CD4-positive, alpha-beta T cell (primary cell): ENCODE measurements at regions of chr2 and their contacts with region 1.

Region 1: GRCh38 chr2:62456721-62457539 is 49.1 kb downstream of the TMEM17 start:
- DNase-seq: peak; percentile 27 to 72 (median 54)
- ATAC-seq: peak; percentile 81
- H3K4me3 ChIP-seq: peak overlapping the region; percentile 47
- H3K4me3 Mint-ChIP-seq: peak overlapping the region; percentile 38
- H3K27ac ChIP-seq: no peak overlapping the region
- H3K27ac Mint-ChIP-seq: no peak overlapping the region
- H3K4me1 ChIP-seq: peaks cover 10% of the 10 kb centered on the region
- H3K4me1 Mint-ChIP-seq: no peaks in the 10 kb centered on the region
- H3K27me3 ChIP-seq: peaks cover 4 to 8% of the 10 kb centered on the region in 2 experiments
- H3K27me3 Mint-ChIP-seq: peaks cover 9% of the 10 kb centered on the region
- CTCF ChIP-seq: peak; percentile 87

Region 2: GRCh38 chr2:62774555-62775366 is 317.8 kb after region 1 on chr2:
- CTCF ChIA-PET with region 1: interaction called, 18 read pairs
- POLR2A ChIA-PET with region 1: interaction called, 4 read pairs
- intact Hi-C with region 1: loop called (anchors 1 kb)
- DNase-seq: peak in 3 of 14 experiments; percentile 50 to 58 (median 53)
- ATAC-seq: no peak
- H3K4me3 ChIP-seq: no peak overlapping the region
- H3K4me3 Mint-ChIP-seq: no peak overlapping the region
- H3K27ac ChIP-seq: no peak overlapping the region
- H3K27ac Mint-ChIP-seq: no peak overlapping the region
- H3K4me1 ChIP-seq: no peaks in the 10 kb centered on the region
- H3K4me1 Mint-ChIP-seq: no peaks in the 10 kb centered on the region
- H3K27me3 ChIP-seq: no peaks in the 10 kb centered on the region
- H3K27me3 Mint-ChIP-seq: no peaks in the 10 kb centered on the region
- CTCF ChIP-seq: peak; percentile 79

Region 3: GRCh38 chr2:63424329-63425078 is 967.6 kb after region 1 on chr2:
- CTCF ChIA-PET with region 1: no interaction called
- POLR2A ChIA-PET with region 1: no interaction called
- intact Hi-C with region 1: loop called (anchors 5 to 10 kb)
- DNase-seq: peak in 3 of 14 experiments; percentile 41 to 49 (median 47)
- ATAC-seq: no peak
- H3K4me3 ChIP-seq: no peak overlapping the region
- H3K4me3 Mint-ChIP-seq: no peak overlapping the region
- H3K27ac ChIP-seq: no peak overlapping the region
- H3K27ac Mint-ChIP-seq: no peak overlapping the region
- H3K4me1 ChIP-seq: no peaks in the 10 kb centered on the region
- H3K4me1 Mint-ChIP-seq: no peaks in the 10 kb centered on the region
- H3K27me3 ChIP-seq: no peaks in the 10 kb centered on the region
- H3K27me3 Mint-ChIP-seq: no peaks in the 10 kb centered on the region
- CTCF ChIP-seq: peak; percentile 51

Region 4: DNA sequence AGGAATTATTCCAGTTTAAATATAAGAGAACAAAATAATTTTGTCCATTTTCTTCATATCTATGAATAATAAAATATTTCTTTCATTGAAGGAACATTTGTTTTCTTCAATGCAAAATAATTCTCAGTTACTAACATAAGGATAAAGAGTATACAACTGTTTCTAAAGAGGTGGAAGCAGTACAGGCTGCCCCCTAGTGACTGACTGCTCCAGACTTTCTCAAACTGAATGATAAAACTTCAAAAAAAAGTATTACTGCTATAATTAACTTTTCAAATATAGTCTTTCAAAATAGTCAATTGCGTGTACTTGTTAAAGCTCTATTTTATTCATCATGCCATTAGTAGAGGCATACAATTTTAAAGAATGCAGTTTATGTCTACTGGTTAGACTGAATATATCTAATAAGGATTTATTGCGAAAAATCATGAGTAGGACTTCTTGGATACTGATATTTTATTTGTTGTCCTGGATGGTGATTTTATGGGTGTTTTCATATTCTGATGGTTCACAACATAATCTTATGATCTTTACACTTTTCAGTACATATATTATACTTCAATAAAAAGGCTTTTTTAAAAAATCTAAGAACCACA is 1031.3 kb after region 1 on chr2:
- CTCF ChIA-PET with region 1: no interaction called
- POLR2A ChIA-PET with region 1: no interaction called
- intact Hi-C with region 1: loop called in 1 of 2 experiments (anchors 5 kb)
- DNase-seq: peak in 2 of 14 experiments; percentile 3 to 12
- ATAC-seq: no peak
- H3K4me3 ChIP-seq: no peak overlapping the region
- H3K4me3 Mint-ChIP-seq: no peak overlapping the region
- H3K27ac ChIP-seq: no peak overlapping the region
- H3K27ac Mint-ChIP-seq: no peak overlapping the region
- H3K4me1 ChIP-seq: no peaks in the 10 kb centered on the region
- H3K4me1 Mint-ChIP-seq: no peaks in the 10 kb centered on the region
- H3K27me3 ChIP-seq: no peaks in the 10 kb centered on the region
- H3K27me3 Mint-ChIP-seq: no peaks in the 10 kb centered on the region
- CTCF ChIP-seq: no peak

Region 5: DNA sequence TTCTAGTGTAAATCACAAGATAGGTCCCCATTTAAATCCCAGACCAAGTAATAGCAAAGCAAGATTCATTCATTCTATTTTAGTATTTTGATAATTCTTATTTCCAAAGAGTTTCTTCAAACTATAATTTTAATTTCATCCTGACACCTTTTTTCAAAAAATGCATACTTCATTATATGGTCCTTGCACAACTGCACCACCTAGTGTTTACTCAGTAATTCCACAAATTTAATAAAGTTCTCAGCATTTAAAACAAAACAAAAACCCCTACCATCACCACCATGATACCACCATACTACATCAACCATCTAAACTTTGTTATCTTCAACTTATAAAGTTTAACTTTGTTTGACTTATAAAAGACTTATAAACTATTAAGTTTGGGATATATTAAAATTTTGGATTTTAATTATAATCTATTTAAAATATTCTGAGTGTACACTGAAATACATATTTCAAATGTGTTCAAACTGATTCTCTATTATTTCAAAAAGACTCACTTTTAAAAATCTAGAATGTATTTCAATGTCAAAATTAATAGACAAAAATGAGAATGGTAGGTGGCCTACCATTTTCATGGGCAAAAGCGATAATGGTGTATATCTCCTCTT is 1087.2 kb after region 1 on chr2:
- CTCF ChIA-PET with region 1: no interaction called
- POLR2A ChIA-PET with region 1: no interaction called
- intact Hi-C with region 1: loop called in 1 of 2 experiments (anchors 5 kb)
- DNase-seq: peak in 1 of 14 experiments; percentile 4
- ATAC-seq: no peak
- H3K4me3 ChIP-seq: no peak overlapping the region
- H3K4me3 Mint-ChIP-seq: no peak overlapping the region
- H3K27ac ChIP-seq: no peak overlapping the region
- H3K27ac Mint-ChIP-seq: no peak overlapping the region
- H3K4me1 ChIP-seq: no peaks in the 10 kb centered on the region
- H3K4me1 Mint-ChIP-seq: no peaks in the 10 kb centered on the region
- H3K27me3 ChIP-seq: no peaks in the 10 kb centered on the region
- H3K27me3 Mint-ChIP-seq: no peaks in the 10 kb centered on the region
- CTCF ChIP-seq: peak; percentile 41

Region 6: DNA sequence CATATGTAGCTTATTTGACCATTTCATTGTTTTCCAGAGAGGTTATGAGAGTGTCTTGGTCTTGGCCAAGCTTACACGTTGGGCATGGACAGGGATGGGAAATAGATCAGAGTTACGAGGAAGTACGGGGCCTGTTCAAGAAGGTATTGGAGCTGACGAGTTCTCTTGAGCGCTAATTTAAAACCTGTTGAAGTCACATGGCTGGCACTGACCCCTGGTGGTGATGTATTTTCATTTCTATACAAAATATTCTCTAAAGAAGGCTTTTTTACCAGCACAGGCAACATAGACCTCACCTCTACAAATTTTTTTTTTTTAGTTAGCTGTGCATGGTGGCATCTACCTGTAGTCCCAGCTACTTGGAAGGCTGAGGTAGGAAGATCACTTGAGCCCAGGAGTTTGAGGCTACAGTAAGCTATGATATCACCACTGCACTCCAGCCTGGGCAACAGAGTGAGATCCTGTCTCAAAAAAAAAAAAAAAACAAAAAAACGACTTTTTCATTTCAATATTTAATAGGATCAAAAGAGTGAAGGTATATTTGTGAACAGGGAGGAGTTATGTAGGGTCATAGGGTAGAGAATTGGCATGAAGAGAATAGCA is 1404.4 kb after region 1 on chr2:
- CTCF ChIA-PET with region 1: no interaction called
- POLR2A ChIA-PET with region 1: no interaction called
- intact Hi-C with region 1: loop called in 1 of 2 experiments (anchors 5 kb)
- DNase-seq: peak; percentile 43 to 86 (median 56)
- ATAC-seq: peak; percentile 68
- H3K4me3 ChIP-seq: no peak overlapping the region
- H3K4me3 Mint-ChIP-seq: peak overlapping the region; percentile 17
- H3K27ac ChIP-seq: no peak overlapping the region
- H3K27ac Mint-ChIP-seq: peak overlapping the region; percentile 24
- H3K4me1 ChIP-seq: peaks cover 11% of the 10 kb centered on the region
- H3K4me1 Mint-ChIP-seq: peaks cover 39% of the 10 kb centered on the region
- H3K27me3 ChIP-seq: no peaks in the 10 kb centered on the region
- H3K27me3 Mint-ChIP-seq: no peaks in the 10 kb centered on the region
- CTCF ChIP-seq: peak; percentile 70